AG04449 (cell line): ENCODE measurements at regions of chr2 and their contacts with region 1.

Region 1: GRCh38 chr2:42117923-42118753 is 51.0 kb upstream of the EML4 start:
- DNase-seq: no peak
- H3K4me3 ChIP-seq: no peak overlapping the region
- CTCF ChIP-seq: no peak

Region 2: GRCh38 chr2:41859615-41860520 is 258.3 kb before region 1 on chr2:
- CTCF ChIA-PET with region 1: no interaction called
- POLR2A ChIA-PET with region 1: no interaction called
- DNase-seq: no peak
- H3K4me3 ChIP-seq: no peak overlapping the region
- CTCF ChIP-seq: no peak

Region 3: DNA sequence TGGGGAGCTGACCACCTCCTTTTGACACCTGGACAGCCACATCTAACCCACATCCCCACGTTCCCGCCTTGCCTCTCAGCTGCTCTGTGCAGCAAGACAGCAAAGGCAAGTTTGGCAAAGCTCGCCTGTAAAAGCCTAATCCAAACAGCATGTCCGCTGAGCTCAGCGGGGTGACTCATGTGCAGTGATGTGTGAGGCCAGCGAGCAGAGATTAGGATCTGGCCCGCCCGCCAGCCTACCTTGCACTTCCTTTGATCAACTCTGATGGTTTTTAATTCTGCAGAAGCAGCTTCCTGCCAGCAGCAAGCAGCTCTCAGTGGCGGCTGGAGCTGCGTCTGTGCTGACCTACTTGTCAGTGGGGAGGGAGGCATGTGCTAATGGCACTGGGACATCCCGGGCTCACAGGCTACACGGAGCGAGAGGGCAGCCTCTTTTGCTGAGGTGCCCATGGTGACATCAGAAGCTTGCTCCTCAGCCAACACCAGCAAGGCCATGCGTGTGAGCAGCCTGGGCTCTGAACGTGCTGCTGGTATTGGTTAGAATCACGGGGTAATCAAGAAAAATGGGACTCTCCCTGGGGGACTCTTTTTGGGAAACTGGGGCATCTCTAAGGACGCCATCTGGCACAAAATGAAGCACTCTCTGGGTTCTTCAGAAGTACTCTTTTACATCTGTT is 15.0 kb after region 1 on chr2:
- CTCF ChIA-PET with region 1: interaction called, 8 read pairs
- POLR2A ChIA-PET with region 1: interaction called, 13 read pairs
- DNase-seq: peak; percentile 86
- H3K4me3 ChIP-seq: peak overlapping the region; percentile 46
- CTCF ChIP-seq: no peak